Prostate gland (tissue), 2 donors: ENCODE measurements at regions of chr15 and their contacts with region 1.

Region 1: DNA sequence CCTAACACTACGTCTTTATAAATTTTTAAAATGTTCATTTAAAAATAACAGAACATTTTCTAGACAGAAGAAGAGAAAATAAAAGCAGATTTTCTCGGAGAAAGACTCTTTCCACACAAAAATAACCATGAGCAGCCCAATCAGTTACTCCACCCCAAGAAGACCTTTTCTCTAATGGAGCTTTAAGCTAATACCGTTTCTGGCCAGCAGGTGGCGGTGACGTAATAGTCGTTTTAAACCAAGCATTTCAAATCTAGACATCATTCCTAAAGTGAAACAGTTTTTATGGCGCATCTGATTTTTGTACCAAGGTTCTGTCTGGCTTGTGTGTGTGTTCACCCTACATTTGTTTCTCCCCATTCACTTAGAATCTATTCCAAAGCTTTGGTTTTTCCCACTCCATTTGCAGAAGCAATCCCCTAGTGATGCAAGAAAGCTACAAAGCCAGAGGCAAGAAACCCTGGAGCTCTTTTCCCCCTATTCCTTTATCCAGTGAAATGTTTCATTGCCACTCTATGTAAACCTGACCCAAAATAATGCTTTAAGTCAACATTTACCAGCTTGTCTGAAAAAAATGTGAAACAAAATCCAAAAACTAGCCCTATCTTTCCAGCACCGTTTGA is 336.7 kb upstream of the IGF1R start:
- DNase-seq: peak; percentile 82
- H3K4me3 ChIP-seq: no peak overlapping the region
- H3K27ac ChIP-seq: no peak overlapping the region
- H3K4me1 ChIP-seq: no peaks in the 10 kb centered on the region
- H3K27me3 ChIP-seq: no peaks in the 10 kb centered on the region
- CTCF ChIP-seq: peak; percentile 48 to 92 (median 82)
- POLR2A ChIP-seq: no peak

Region 2: GRCh38 chr15:98421419-98422129 is 109.9 kb after region 1 on chr15:
- intact Hi-C with region 1: loop called (anchors 1 kb)
- DNase-seq: peak; percentile 23
- H3K4me3 ChIP-seq: no peak overlapping the region
- H3K27ac ChIP-seq: no peak overlapping the region
- H3K4me1 ChIP-seq: no peaks in the 10 kb centered on the region
- H3K27me3 ChIP-seq: peaks cover 11% of the 10 kb centered on the region
- CTCF ChIP-seq: peak; percentile 92 to 100 (median 97)
- POLR2A ChIP-seq: no peak